Colonic mucosa (tissue), 4 donors: ENCODE measurements at regions of chr15 and their contacts with region 1.

Region 1: GRCh38 chr15:33029109-33029652 is 165.3 kb downstream of the FMN1 start:
- DNase-seq: no peak
- H3K4me3 ChIP-seq: no peak overlapping the region
- H3K27ac ChIP-seq: peak overlapping the region; percentile 3
- H3K4me1 ChIP-seq: peaks cover 4% of the 10 kb centered on the region
- H3K27me3 ChIP-seq: no peaks in the 10 kb centered on the region
- CTCF ChIP-seq: no peak

Region 2: GRCh38 chr15:33067941-33068481 is 38.8 kb after region 1 on chr15:
- intact Hi-C with region 1: loop called (anchors 2 kb)
- DNase-seq: peak; percentile 91
- H3K4me3 ChIP-seq: peak overlapping the region; percentile 34
- H3K27ac ChIP-seq: peak overlapping the region; percentile 90
- H3K4me1 ChIP-seq: peaks cover 4% of the 10 kb centered on the region
- H3K27me3 ChIP-seq: no peaks in the 10 kb centered on the region
- CTCF ChIP-seq: no peak

Region 3: GRCh38 chr15:33179874-33180273 is 150.7 kb after region 1 on chr15:
- intact Hi-C with region 1: no loop called
- DNase-seq: no peak
- H3K4me3 ChIP-seq: no peak overlapping the region
- H3K27ac ChIP-seq: no peak overlapping the region
- H3K4me1 ChIP-seq: no peaks in the 10 kb centered on the region
- H3K27me3 ChIP-seq: no peaks in the 10 kb centered on the region
- CTCF ChIP-seq: no peak

Region 4: GRCh38 chr15:33215941-33216872 is 187.0 kb after region 1 on chr15:
- intact Hi-C with region 1: no loop called
- DNase-seq: no peak
- H3K4me3 ChIP-seq: no peak overlapping the region
- H3K27ac ChIP-seq: no peak overlapping the region
- H3K4me1 ChIP-seq: no peaks in the 10 kb centered on the region
- H3K27me3 ChIP-seq: no peaks in the 10 kb centered on the region
- CTCF ChIP-seq: peak; percentile 36

Region 5: DNA sequence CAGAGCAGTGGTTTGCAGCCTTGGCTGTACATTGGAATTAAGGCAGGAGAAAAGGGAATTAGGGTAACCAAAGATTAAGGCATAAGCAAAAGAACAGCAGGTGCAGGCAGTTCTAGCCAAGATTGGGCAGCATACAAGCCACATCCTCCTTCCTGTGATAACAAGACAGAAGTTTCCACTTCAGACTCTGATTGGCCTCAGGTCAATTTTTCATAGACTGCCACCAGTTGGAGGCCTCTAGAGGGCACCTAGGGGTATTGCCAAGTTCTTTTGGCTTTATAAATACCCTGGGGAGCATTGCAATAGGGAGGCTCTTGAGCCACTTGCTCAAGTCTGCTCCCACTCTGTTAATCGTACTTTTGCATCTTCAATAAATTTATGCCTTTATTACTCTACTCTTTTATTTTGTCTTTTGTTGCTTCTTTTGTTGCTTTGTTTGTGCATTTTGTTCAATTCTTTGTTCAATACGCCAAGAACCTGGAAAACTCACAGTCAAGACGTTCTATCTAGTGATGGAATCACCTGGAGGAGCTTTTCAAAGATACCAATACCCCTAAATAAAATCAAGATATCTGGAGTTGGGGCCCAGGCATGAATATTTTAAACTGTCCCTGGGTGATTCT is 197.5 kb after region 1 on chr15:
- intact Hi-C with region 1: no loop called
- DNase-seq: peak; percentile 45
- H3K4me3 ChIP-seq: no peak overlapping the region
- H3K27ac ChIP-seq: no peak overlapping the region
- H3K4me1 ChIP-seq: no peaks in the 10 kb centered on the region
- H3K27me3 ChIP-seq: no peaks in the 10 kb centered on the region
- CTCF ChIP-seq: peak; percentile 26